Activated CD8-positive, alpha-beta T cell treated with anti-CD3 and anti-CD28 coated beads, Interleukin-2, amount 10 ng/mL, durations not matched to agents 7 days and 5 days (primary cell): ENCODE measurements at regions of chrX and their contacts with region 1.

Region 1: GRCh38 chrX:76454456-76454927 is 27.0 kb downstream of the MAGEE1 start:
- DNase-seq: peak; percentile 20
- ATAC-seq: no peak
- H3K4me3 Mint-ChIP-seq: no peak overlapping the region
- H3K27ac Mint-ChIP-seq: no peak overlapping the region
- H3K4me1 Mint-ChIP-seq: no peaks in the 10 kb centered on the region
- H3K27me3 Mint-ChIP-seq: no peaks in the 10 kb centered on the region

Region 2: DNA sequence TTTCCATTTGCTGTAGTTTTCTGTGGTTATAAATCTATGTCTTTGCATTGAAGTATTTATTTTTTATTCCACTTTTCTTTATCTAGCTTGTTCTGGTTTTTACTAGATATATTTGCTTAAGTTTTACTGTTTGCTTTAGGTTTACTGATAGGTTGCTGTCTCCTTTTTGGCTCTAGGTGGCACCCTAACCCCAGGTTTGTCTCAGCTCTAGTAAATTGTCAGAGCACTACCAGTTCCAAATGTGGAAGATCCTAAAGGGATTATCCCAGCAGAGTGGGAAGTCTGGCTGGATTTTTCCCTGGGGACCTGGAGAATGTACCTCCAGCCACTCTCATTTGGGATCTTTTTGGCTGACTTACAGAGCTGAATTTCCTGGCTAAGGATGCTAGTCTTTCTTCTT is 175.5 kb before region 1 on chrX:
- CTCF ChIA-PET with region 1: interaction called, 33 read pairs
- POLR2A ChIA-PET with region 1: no interaction called
- DNase-seq: peak; percentile 53
- ATAC-seq: no peak
- H3K4me3 Mint-ChIP-seq: no peak overlapping the region
- H3K27ac Mint-ChIP-seq: no peak overlapping the region
- H3K4me1 Mint-ChIP-seq: no peaks in the 10 kb centered on the region
- H3K27me3 Mint-ChIP-seq: peaks cover 3% of the 10 kb centered on the region